ENCODE measurements at regions of chr4 and their contacts with region 1.

Region 1: GRCh38 chr4:158856852-158857251 is 88.0 kb downstream of the FNIP2 start:
- DNase-seq: no peak
- H3K4me3 ChIP-seq: no peak overlapping the region
- H3K27ac ChIP-seq: peak overlapping the region; percentile 7
- H3K4me1 ChIP-seq: peaks cover 39% of the 10 kb centered on the region
- H3K27me3 ChIP-seq: no peaks in the 10 kb centered on the region
- CTCF ChIP-seq: peak; percentile 67

Region 2: DNA sequence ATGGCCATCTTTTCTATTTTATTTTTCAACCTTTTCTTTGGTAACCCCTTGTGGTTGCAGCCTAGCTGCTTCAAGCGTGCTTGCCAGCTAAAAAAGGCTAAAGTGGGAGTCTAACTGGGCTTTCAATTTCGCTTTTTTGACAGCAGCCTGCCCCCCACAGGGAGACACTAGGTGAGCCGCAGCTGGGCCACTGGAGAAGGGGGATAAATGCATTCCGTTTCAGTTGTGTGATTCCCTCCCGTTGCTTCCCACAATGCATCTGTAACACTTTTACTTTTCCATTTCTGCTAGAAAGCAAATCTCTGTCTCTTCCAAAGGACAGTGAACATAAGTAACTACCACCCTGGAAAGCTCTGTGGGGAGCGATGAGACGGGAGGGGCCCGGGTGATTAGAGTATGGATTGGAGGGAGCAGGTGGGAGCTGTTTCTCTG is 159.8 kb after region 1 on chr4:
- intact Hi-C with region 1: no loop called
- DNase-seq: no peak
- H3K4me3 ChIP-seq: no peak overlapping the region
- H3K27ac ChIP-seq: no peak overlapping the region
- H3K4me1 ChIP-seq: peaks cover 7% of the 10 kb centered on the region
- H3K27me3 ChIP-seq: no peaks in the 10 kb centered on the region
- CTCF ChIP-seq: no peak

Region 3: GRCh38 chr4:159175085-159175988 is 318.5 kb after region 1 on chr4:
- intact Hi-C with region 1: loop called (anchors 10 kb)
- DNase-seq: peak; percentile 36
- H3K4me3 ChIP-seq: peak overlapping the region; percentile 23
- H3K27ac ChIP-seq: peak overlapping the region; percentile 80
- H3K4me1 ChIP-seq: peaks cover 100% of the 10 kb centered on the region
- H3K27me3 ChIP-seq: no peaks in the 10 kb centered on the region
- CTCF ChIP-seq: peak; percentile 90

Region 4: GRCh38 chr4:159206427-159206871 is 349.6 kb after region 1 on chr4:
- intact Hi-C with region 1: loop called (anchors 10 kb)
- DNase-seq: no peak
- H3K4me3 ChIP-seq: no peak overlapping the region
- H3K27ac ChIP-seq: peak overlapping the region; percentile 84
- H3K4me1 ChIP-seq: peaks cover 94% of the 10 kb centered on the region
- H3K27me3 ChIP-seq: no peaks in the 10 kb centered on the region
- CTCF ChIP-seq: no peak

Measured in left ventricle myocardium inferior (tissue), 1 donor.